ENCODE measurements at regions of chr10 and their contacts with region 1.

Region 1: DNA sequence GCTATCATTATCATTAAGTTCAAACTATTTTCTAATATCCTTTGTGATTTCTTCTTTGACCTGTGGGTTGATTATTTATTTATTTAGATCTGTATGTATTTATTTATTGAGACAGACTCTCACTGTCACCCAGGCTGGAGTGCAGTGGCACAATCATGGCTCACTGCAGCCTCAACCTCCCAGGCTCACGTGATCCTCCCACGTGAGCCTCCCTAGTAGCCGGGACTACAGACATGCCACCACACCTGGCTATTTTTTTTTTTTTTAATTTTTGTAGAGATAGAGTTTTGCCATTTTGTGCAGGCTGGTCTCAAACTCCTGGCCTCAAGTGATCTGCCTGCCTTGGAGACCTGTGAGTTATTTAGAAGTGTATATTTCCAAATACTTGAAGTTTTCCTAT is 28.7 kb upstream of the MRPS16 start:
- DNase-seq: no peak
- H3K4me3 ChIP-seq: no peak overlapping the region
- H3K27ac ChIP-seq: no peak overlapping the region
- H3K4me1 ChIP-seq: no peaks in the 10 kb centered on the region
- H3K27me3 ChIP-seq: no peaks in the 10 kb centered on the region
- CTCF ChIP-seq: no peak
- EP300 ChIP-seq: no peak
- POLR2A ChIP-seq: no peak
- RAD21 ChIP-seq: no peak

Region 2: DNA sequence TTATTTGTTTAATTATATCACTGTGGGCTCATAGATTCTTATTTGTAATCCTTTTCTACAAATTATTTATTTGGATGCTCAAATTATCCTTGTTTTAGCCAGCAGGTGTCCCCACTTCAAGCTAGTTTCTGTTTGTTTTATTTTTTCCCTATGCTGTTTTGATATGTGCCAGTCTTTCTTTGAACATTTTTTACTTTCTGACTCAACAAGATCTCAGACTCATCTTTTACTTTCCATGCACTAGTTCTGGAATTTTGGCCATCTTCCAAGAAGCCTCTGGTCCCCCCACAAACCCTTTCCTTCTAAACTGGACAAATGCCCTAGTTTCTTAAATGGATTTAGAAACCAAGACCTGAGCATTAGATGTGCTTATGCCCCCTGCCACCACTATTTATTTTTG is 17.1 kb before region 1 on chr10:
- CTCF ChIA-PET with region 1: interaction called, 15 read pairs
- POLR2A ChIA-PET with region 1: no interaction called
- DNase-seq: no peak
- H3K4me3 ChIP-seq: no peak overlapping the region
- H3K27ac ChIP-seq: no peak overlapping the region
- H3K4me1 ChIP-seq: no peaks in the 10 kb centered on the region
- H3K27me3 ChIP-seq: no peaks in the 10 kb centered on the region
- CTCF ChIP-seq: peak in 1 of 3 experiments; percentile 21; a peak in 2 of 4 replicates
- EP300 ChIP-seq: no peak
- POLR2A ChIP-seq: no peak
- RAD21 ChIP-seq: peak; percentile 35 to 40; a peak in 3 of 4 replicates

Region 3: DNA sequence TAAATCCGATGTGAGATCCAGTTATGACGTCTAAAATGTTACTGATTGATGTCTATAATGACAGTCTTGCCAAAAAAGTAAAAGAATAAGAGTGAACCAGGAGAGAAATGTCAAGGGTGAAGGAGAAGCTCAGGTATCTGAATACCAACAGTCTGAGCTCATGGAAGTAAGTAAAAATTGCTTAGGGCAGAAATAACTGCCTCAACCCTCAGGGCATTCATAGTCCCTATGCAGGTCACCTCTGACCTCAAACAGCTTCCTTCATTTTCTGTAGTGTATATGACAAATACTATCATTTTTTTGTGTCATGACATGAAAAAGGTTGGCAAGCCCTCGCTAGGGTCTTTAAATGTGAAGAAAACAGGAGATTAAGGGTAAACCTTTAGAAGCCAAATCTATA is 12.4 kb after region 1 on chr10:
- CTCF ChIA-PET with region 1: no interaction called
- POLR2A ChIA-PET with region 1: no interaction called
- DNase-seq: no peak
- H3K4me3 ChIP-seq: no peak overlapping the region
- H3K27ac ChIP-seq: no peak overlapping the region
- H3K4me1 ChIP-seq: no peaks in the 10 kb centered on the region
- H3K27me3 ChIP-seq: no peaks in the 10 kb centered on the region
- CTCF ChIP-seq: no peak
- EP300 ChIP-seq: no peak
- POLR2A ChIP-seq: no peak
- RAD21 ChIP-seq: no peak

Measured in H1 (cell line).